ENCODE measurements at regions of chr4 and their contacts with region 1.

Region 1: GRCh38 chr4:11428899-11429698 is 405 bp upstream of the HS3ST1 start:
- DNase-seq: peak; percentile 95
- H3K4me3 ChIP-seq: peak overlapping the region; percentile 54 to 89 (median 66)
- H3K27ac ChIP-seq: peak overlapping the region; percentile 55 to 79 (median 74)
- H3K4me1 ChIP-seq: peaks cover 0 to 74% (median 38%) of the 10 kb centered on the region in 6 donors
- H3K27me3 ChIP-seq: peaks cover 0 to 42% (median 13%) of the 10 kb centered on the region in 7 donors
- CTCF ChIP-seq: peak; percentile 40 to 81 (median 69)
- POLR2A ChIP-seq: peak in 1 of 3 donors; percentile 11

Region 2: DNA sequence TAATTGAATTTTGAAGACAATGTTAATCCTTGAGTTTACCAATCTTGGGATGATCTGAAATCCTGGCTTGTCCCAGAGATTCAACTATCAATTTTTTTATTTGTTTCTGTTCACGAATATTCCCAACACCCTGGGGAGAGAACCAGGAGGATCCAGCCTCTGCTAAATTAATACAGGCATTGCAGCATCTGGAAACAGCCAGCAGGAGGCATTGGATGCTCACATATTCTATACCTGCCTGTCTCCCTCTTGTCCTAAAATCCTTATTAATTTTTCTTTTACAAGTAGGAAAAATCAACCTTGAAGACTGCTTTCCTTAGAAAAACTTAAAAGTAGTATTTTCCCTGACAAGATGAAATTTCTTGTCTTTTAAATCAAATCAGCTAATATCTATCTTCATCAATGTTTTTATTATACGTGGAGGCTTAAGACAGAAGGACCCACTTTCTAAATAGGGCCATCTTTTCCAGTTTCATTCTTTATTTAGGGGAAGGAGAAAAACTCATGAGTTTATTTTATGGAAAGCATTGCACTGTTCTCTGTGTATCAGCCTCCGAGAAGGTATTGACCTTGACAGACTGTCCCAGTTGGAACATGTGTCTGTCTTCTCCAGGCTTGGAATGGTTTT is 846.9 kb before region 1 on chr4:
- intact Hi-C with region 1: loop called (anchors 5 kb)
- DNase-seq: no peak
- H3K4me3 ChIP-seq: no peak overlapping the region
- H3K27ac ChIP-seq: no peak overlapping the region
- H3K4me1 ChIP-seq: peaks cover 4 to 33% (median 17%) of the 10 kb centered on the region in 6 donors
- H3K27me3 ChIP-seq: no peaks in the 10 kb centered on the region
- CTCF ChIP-seq: peak; percentile 48 to 82 (median 73)
- POLR2A ChIP-seq: no peak

Measured in spleen (tissue), 13 donors.